Dendritic cell treated with granulocyte-macrophage colony-stimulating factor and Interleukin-4, amounts not matched to agents 40 ng/mL and 50 ng/mL, for 4 days (primary cell): ENCODE measurements at regions of chr3 and their contacts with region 1.

Region 1: DNA sequence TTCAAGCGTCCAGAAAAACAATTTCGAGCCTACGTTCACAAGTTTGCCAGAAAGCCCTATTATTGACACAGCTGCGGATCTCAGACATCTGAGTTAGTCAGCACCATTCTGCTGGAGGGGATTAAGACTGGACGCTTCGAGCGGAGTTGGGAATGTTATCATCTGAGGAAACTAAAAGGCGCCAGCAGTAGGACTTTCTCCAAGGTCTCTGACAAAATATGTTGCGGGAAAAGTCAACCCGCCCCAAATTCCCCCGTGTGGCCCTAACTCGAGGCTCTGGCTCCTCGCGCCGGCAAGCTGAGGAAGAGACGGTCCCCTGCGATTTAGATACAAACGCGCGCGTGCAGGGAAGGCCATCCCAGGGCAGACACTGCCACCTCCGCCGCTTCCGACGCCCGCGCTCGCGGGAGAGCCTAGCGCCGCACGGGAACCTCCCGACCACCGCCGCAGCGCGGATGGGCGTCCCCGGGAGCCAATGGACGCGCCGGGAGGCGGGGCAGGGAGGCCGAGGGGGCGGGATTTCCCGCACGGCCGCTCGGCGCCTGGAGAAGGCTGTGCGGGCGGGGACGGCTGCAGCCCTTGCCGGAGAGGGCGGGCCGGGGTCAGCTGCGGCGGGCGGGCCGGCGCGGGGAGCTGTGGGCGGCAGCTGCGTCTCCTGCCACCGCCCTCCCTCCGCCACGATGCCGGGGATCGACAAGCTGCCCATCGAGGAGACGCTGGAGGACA is at the start of gene APPL1:
- H3K4me3 Mint-ChIP-seq: peak within 1 kb of the TSS; percentile 90
- H3K27ac Mint-ChIP-seq: peak within 1 kb of the TSS; percentile 87
- H3K4me1 Mint-ChIP-seq: peaks cover 35% of the 10 kb centered on the region
- H3K27me3 Mint-ChIP-seq: no peaks in the 10 kb centered on the region

Region 2: DNA sequence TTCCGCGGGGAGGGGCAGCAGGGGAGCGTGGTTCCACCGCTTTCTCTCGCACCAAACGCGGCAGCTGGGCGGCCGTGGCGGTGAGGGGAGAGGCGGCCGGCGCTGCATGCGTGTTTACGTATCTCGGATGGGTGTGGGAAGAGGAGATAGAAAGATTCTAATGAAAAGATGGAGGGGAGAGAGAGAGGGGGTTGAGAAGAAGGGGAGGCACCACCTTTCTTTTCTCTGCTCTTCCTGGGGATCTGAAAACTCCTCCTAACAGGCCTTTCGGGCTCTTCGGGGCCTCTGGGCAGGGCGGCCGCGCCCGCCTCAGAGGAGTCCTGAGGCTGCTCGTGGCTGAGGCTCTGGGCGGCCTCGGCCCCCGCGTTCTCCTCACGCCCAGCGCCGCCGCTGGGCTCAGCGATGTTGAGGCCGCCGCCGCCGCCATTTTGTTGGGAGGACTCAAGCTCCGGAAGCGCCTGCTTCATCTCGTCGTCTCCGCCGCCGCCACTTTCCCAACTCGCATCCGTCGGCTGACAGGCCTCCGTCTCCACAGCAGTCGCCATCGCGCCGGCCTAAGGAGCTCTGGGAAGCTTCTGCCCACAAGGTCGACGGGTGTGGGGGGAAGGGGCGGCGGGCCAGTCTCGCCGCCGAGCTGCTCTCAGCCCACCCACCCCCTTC is 544.8 kb before region 1 on chr3:
- intact Hi-C with region 1: loop called (anchors 5 kb)
- H3K4me3 Mint-ChIP-seq: peak overlapping the region; percentile 95
- H3K27ac Mint-ChIP-seq: peak overlapping the region; percentile 93
- H3K4me1 Mint-ChIP-seq: peaks cover 13% of the 10 kb centered on the region
- H3K27me3 Mint-ChIP-seq: no peaks in the 10 kb centered on the region

Region 3: GRCh38 chr3:57098418-57099310 is 128.7 kb before region 1 on chr3:
- intact Hi-C with region 1: loop called (anchors 5 kb)
- H3K4me3 Mint-ChIP-seq: no peak overlapping the region
- H3K27ac Mint-ChIP-seq: no peak overlapping the region
- H3K4me1 Mint-ChIP-seq: peaks cover 15% of the 10 kb centered on the region
- H3K27me3 Mint-ChIP-seq: peaks cover 5% of the 10 kb centered on the region